CD4-positive, alpha-beta T cell (primary cell): ENCODE measurements at regions of chr16 and their contacts with region 1.

Region 1: DNA sequence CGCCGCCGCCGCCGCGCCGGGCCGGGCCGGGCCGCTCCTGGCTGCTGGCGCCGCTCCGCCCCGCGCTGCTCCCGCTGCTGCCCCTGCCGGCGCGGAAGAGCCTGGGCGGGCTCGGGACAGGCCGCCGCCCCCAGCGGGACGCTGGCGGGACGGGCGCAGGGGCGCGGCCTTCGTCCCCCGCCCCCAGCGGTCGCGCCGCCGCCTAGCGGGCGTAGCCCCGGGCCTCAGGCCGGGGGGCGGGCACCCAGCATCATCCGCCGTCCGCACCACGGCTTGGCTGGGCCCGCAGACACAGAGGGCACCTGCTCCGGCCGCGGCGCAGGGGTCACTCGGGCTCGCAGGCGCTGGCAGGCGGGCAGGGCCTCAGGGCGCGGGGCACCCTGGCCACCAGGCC is at the start of gene AMFR:
- DNase-seq: peak; percentile 19 to 94 (median 58)
- ATAC-seq: peak; percentile 94
- H3K4me3 ChIP-seq: peak within 1 kb of the TSS; percentile 66
- H3K4me3 Mint-ChIP-seq: peak within 1 kb of the TSS; percentile 98
- H3K27ac ChIP-seq: no peak within 1 kb of the TSS
- H3K27ac Mint-ChIP-seq: peak within 1 kb of the TSS; percentile 89
- H3K4me1 ChIP-seq: peaks cover 21% of the 10 kb centered on the region
- H3K4me1 Mint-ChIP-seq: peaks cover 40% of the 10 kb centered on the region
- H3K27me3 ChIP-seq: no peaks in the 10 kb centered on the region
- H3K27me3 Mint-ChIP-seq: no peaks in the 10 kb centered on the region
- CTCF ChIP-seq: no peak
- total RNA-seq, gene AMFR: 79.2 to 83.8 TPM

Region 2: GRCh38 chr16:56191156-56191815 is 234.2 kb before region 1 on chr16 and contains the start of gene GNAO1:
- CTCF ChIA-PET with region 1: no interaction called
- POLR2A ChIA-PET with region 1: no interaction called
- intact Hi-C with region 1: loop called in 1 of 2 experiments (anchors 10 kb)
- DNase-seq: peak; percentile 33 to 90 (median 54)
- ATAC-seq: peak; percentile 69
- H3K4me3 ChIP-seq: peak within 1 kb of the TSS; percentile 66
- H3K4me3 Mint-ChIP-seq: peak within 1 kb of the TSS; percentile 89
- H3K27ac ChIP-seq: no peak within 1 kb of the TSS
- H3K27ac Mint-ChIP-seq: peak within 1 kb of the TSS; percentile 47
- H3K4me1 ChIP-seq: peaks cover 39% of the 10 kb centered on the region
- H3K4me1 Mint-ChIP-seq: peaks cover 25% of the 10 kb centered on the region
- H3K27me3 ChIP-seq: peaks cover 34 to 54% of the 10 kb centered on the region in 2 experiments
- H3K27me3 Mint-ChIP-seq: peaks cover 63% of the 10 kb centered on the region
- CTCF ChIP-seq: no peak
- total RNA-seq, gene GNAO1: 7.3 to 7.9 TPM

Region 3: GRCh38 chr16:56450986-56451752 is 25.7 kb after region 1 on chr16 and contains the starts of genes NUDT21 and OGFOD1:
- CTCF ChIA-PET with region 1: no interaction called
- POLR2A ChIA-PET with region 1: interaction called, 11 read pairs
- intact Hi-C with region 1: loop called in 1 of 2 experiments (anchors 1 kb)
- DNase-seq: peak; percentile 81 to 98 (median 88)
- ATAC-seq: peak; percentile 98
- H3K4me3 ChIP-seq: peak within 1 kb of the TSS; percentile 91
- H3K4me3 Mint-ChIP-seq: peak within 1 kb of the TSS; percentile 92
- H3K27ac ChIP-seq: peak within 1 kb of the TSS; percentile 58 to 80
- H3K27ac Mint-ChIP-seq: peak within 1 kb of the TSS; percentile 83
- H3K4me1 ChIP-seq: peaks cover 20% of the 10 kb centered on the region
- H3K4me1 Mint-ChIP-seq: peaks cover 70% of the 10 kb centered on the region
- H3K27me3 ChIP-seq: no peaks in the 10 kb centered on the region
- H3K27me3 Mint-ChIP-seq: no peaks in the 10 kb centered on the region
- CTCF ChIP-seq: no peak
- total RNA-seq, gene NUDT21: 89.6 to 96.6 TPM
- total RNA-seq, gene OGFOD1: 14.6 to 14.8 TPM

Region 4: GRCh38 chr16:56708525-56709442 is 283.3 kb after region 1 on chr16:
- CTCF ChIA-PET with region 1: no interaction called
- POLR2A ChIA-PET with region 1: no interaction called
- intact Hi-C with region 1: loop called in 1 of 2 experiments (anchors 10 kb)
- DNase-seq: peak in 13 of 14 experiments; percentile 10 to 63 (median 41)
- ATAC-seq: peak; percentile 90
- H3K4me3 ChIP-seq: peak overlapping the region; percentile 35
- H3K4me3 Mint-ChIP-seq: peak overlapping the region; percentile 83
- H3K27ac ChIP-seq: peak overlapping the region in 1 of 2 donors; percentile 50
- H3K27ac Mint-ChIP-seq: peak overlapping the region; percentile 92
- H3K4me1 ChIP-seq: peaks cover 26% of the 10 kb centered on the region
- H3K4me1 Mint-ChIP-seq: peaks cover 28% of the 10 kb centered on the region
- H3K27me3 ChIP-seq: no peaks in the 10 kb centered on the region
- H3K27me3 Mint-ChIP-seq: no peaks in the 10 kb centered on the region
- CTCF ChIP-seq: no peak